ENCODE measurements at regions of chr1 and their contacts with region 1.

Region 1: DNA sequence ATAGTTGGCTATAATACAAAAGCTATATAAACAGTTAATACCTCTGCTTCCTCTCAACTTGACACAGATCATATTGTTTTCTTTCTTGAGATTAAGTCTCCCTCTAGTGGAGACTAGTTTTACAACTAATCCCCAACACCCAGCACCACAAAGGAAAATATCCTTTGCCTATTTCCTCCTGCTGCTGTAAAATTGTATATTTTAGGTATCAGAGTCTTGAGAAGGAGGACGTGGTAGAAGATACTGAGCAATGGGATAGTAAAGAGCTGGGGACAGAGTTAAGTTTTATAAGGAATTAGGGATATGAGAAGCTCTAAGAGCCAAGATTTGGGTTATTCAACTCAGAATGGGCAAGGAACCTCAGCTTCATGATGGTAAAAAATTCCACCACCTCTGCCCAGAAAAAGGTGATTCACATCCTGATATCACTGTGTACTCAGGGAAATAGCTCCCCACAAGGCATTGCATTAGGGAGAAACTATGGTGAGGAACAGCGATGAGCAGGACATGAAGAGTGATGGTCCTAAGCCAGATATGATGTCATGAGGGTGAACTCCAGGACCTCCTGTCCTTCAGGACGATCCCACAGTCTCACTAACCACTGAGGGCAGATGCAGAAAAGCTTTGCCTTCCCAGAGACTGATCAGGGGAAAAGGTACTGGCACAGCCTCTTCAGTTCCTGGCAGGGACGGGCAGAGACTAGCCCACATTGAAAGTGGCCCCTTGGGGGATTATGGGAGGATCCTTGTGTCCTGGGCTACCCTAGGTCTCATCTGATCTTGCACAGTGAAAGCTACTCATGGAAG is 14.7 kb upstream of the CFAP126 start:
- DNase-seq: no peak
- H3K4me3 Mint-ChIP-seq: no peak overlapping the region
- H3K27ac Mint-ChIP-seq: no peak overlapping the region
- H3K4me1 Mint-ChIP-seq: peaks cover 17% of the 10 kb centered on the region
- H3K27me3 Mint-ChIP-seq: no peaks in the 10 kb centered on the region

Region 2: GRCh38 chr1:161185282-161185682 is 197.1 kb before region 1 on chr1:
- CTCF ChIA-PET with region 1: interaction called, 38 read pairs
- DNase-seq: peak; percentile 91
- H3K4me3 Mint-ChIP-seq: peak overlapping the region; percentile 59
- H3K27ac Mint-ChIP-seq: peak overlapping the region; percentile 98
- H3K4me1 Mint-ChIP-seq: peaks cover 81% of the 10 kb centered on the region
- H3K27me3 Mint-ChIP-seq: no peaks in the 10 kb centered on the region

Region 3: DNA sequence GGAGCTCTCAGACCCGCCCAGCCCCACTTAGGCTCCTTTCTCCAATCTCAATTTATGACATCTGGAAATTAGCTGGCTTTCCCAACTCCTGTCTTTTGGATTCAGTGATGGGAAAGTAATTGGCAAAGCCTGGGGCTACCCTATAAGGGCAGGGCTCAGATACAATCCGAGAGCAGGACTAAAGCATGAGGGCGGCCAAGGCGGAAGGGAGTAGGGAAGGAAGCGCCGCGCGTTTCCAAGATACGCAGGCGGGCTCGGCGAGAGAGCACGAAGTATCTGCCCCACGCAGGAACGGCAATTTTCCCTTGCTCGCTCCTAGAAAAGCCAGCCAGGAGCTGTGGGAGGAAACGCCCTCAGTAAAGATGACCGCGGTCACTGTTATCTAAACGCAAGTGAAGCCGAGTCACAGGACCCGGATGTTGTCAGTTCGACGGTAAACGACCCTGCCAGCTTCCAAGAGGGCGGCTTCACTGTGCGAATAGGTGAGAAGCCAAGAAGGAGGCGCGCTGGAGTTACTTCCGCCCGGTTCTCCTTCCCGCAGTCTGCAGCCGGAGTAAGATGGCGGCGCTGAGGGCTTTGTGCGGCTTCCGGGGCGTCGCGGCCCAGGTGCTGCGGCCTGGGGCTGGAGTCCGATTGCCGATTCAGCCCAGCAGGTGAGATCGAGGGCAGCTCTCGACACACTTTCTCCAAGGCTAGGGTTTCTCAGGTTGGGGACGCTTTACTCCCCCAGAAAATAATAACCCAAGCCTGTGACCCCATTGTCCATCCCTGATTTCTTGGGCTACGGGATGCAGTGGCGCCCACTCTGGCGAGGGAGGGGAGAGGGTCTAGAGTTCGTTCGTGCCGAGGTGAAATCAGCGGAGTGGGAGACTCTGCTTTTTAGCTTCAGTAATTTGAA is 180.3 kb before region 1 on chr1 and contains the start of gene NDUFS2:
- CTCF ChIA-PET with region 1: interaction called, 33 read pairs
- DNase-seq: peak; percentile 99
- H3K4me3 Mint-ChIP-seq: peak within 1 kb of the TSS; percentile 94
- H3K27ac Mint-ChIP-seq: peak within 1 kb of the TSS; percentile 97
- H3K4me1 Mint-ChIP-seq: peaks cover 84% of the 10 kb centered on the region
- H3K27me3 Mint-ChIP-seq: no peaks in the 10 kb centered on the region

Region 4: GRCh38 chr1:161216945-161217712 is 165.3 kb before region 1 on chr1:
- CTCF ChIA-PET with region 1: interaction called, 13 read pairs
- DNase-seq: no peak
- H3K4me3 Mint-ChIP-seq: no peak overlapping the region
- H3K27ac Mint-ChIP-seq: no peak overlapping the region
- H3K4me1 Mint-ChIP-seq: peaks cover 52% of the 10 kb centered on the region
- H3K27me3 Mint-ChIP-seq: peaks cover 5% of the 10 kb centered on the region